ENCODE measurements at regions of chr7 and their contacts with region 1.

Region 1: GRCh38 chr7:124219681-124220080 is 186.8 kb upstream of the TMEM229A start:
- DNase-seq: no peak

Region 2: DNA sequence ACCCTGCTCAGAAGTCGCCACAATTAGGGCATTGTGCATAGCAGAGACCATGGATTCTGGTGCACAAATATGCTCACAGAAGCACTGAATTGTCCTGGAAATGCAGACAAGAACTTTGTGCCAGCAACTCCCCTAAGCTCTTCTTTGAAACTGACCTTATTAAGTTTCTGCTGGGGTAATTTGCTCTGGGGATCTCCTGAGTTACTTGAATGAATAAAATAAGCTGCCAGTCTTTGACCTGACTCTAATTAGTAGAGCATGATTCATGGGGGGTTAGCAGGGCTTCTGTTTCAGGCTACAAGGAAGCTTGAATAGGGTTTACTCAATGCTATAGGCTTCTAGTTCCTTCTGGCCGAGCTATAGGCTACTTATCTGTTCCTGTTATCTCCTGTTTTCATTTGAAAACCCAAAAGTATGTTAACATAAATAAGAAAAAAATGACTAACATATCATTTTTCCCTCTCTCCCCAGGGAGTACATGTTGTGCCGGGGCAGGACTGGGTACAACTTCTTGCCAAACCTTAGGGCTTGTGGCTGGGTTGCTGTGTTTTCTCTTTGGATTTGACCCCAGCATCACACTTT is 17.8 kb before region 1 on chr7:
- intact Hi-C with region 1: no loop called
- DNase-seq: no peak

Region 3: DNA sequence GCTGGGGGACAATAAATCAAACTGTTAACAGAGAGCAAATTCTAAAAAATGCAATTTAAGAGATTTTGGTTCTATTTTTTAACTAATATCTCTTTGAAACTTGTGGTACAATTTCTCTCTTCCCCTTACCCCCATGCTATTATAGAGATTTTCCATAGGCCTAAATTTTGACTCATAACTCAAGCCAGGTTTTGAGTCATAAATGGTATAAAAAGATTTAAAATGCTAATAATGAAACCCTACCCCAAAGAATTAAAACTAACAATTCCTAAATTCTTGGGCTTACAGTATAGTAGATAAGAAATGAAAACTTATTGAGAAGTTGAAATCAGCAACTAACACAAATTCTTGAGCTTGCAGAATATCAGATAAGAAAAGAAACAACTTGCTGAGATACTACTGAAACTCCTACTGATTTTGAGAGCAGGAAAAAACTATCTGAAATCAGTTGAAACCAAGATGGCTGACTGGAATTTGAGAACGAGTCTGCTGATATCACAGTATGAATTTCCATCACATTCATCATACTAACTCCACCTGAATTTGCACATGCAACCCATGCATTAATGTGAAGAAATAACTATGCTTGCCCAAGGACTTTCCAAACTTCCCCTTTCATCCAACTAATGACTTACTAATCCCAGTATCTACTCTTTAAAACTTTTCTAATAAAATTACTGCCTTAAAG is 673.6 kb after region 1 on chr7:
- intact Hi-C with region 1: loop called in 1 of 2 experiments (anchors 5 kb)
- DNase-seq: no peak